AG04450 (cell line): ENCODE measurements at regions of chr19 and their contacts with region 1.

Region 1: GRCh38 chr19:39435499-39436349 is at the start of gene RPS16:
- DNase-seq: peak; percentile 93
- H3K4me3 ChIP-seq: peak within 1 kb of the TSS; percentile 99
- H3K27ac ChIP-seq: peak within 1 kb of the TSS; percentile 77
- H3K27me3 ChIP-seq: no peaks in the 10 kb centered on the region
- CTCF ChIP-seq: no peak
- polyA plus RNA-seq, gene RPS16: 1,488 and 2,094 TPM in 2 replicates

Region 2: GRCh38 chr19:39351537-39352064 is 84.1 kb before region 1 on chr19:
- CTCF ChIA-PET with region 1: no interaction called
- POLR2A ChIA-PET with region 1: no interaction called
- DNase-seq: no peak
- H3K4me3 ChIP-seq: no peak overlapping the region
- H3K27ac ChIP-seq: no peak overlapping the region
- H3K27me3 ChIP-seq: no peaks in the 10 kb centered on the region
- CTCF ChIP-seq: no peak

Region 3: GRCh38 chr19:39390755-39391592 is 44.8 kb before region 1 on chr19 and contains the starts of genes MED29 and PAF1:
- CTCF ChIA-PET with region 1: no interaction called
- POLR2A ChIA-PET with region 1: interaction called, 20 read pairs
- DNase-seq: peak; percentile 99
- H3K4me3 ChIP-seq: peak within 1 kb of the TSS; percentile 99
- H3K27ac ChIP-seq: peak within 1 kb of the TSS; percentile 94
- H3K27me3 ChIP-seq: no peaks in the 10 kb centered on the region
- CTCF ChIP-seq: no peak
- polyA plus RNA-seq, gene MED29: 28.0 and 29.9 TPM in 2 replicates
- polyA plus RNA-seq, gene PAF1: 51.9 and 60.5 TPM in 2 replicates

Region 4: GRCh38 chr19:39397360-39398296 is 38.1 kb before region 1 on chr19:
- CTCF ChIA-PET with region 1: interaction called, 10 read pairs
- POLR2A ChIA-PET with region 1: interaction called, 18 read pairs
- DNase-seq: no peak
- H3K4me3 ChIP-seq: no peak overlapping the region
- H3K27ac ChIP-seq: peak overlapping the region; percentile 57
- H3K27me3 ChIP-seq: no peaks in the 10 kb centered on the region
- CTCF ChIP-seq: peak; percentile 96

Region 5: GRCh38 chr19:39406656-39407393 is 28.9 kb before region 1 on chr19 and contains the start of gene ZFP36:
- CTCF ChIA-PET with region 1: interaction called, 9 read pairs
- POLR2A ChIA-PET with region 1: interaction called, 27 read pairs
- DNase-seq: peak; percentile 60
- H3K4me3 ChIP-seq: peak within 1 kb of the TSS; percentile 93
- H3K27ac ChIP-seq: peak within 1 kb of the TSS; percentile 81
- H3K27me3 ChIP-seq: no peaks in the 10 kb centered on the region
- CTCF ChIP-seq: no peak
- polyA plus RNA-seq, gene ZFP36: 4.1 and 8.3 TPM in 2 replicates

Region 6: DNA sequence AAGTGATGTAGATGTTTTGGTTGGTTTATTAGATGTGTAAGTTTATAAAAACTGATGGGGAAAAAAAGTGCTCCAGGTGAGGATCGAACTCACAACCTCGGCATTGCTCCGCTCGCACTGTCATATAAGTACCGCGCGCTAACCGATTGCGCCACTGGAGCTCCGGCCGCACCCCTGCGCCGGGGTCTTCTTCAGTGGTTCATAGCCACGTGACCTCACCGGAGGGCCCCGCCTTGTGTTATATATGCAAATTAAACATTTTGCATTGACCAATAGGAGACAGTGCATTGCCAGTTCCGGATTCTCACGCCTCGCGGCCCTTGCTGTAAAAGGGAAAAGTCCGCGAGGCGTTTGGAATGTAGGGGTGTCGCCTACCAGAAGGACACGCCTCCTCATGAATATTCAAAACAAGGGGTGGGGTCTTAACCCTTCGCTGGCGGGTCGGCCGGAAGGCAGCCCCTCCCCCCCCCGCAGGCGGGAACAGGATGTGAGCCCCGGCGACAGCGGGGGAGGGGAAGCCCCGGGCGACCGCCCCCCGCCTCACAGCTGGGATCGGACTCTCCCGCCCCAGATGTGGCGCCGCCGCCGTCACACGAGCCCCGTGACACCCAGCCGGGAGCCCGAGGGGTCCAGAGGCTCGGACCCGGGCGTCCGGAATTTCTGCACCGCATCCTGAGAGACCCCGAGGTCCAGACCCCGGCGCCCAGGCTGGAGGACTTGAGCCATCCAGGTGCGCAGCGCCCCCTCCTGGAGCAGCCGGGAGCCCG is 23.4 kb before region 1 on chr19 and contains the start of gene PLEKHG2:
- CTCF ChIA-PET with region 1: interaction called, 9 read pairs
- POLR2A ChIA-PET with region 1: interaction called, 44 read pairs
- DNase-seq: peak; percentile 100
- H3K4me3 ChIP-seq: peak within 1 kb of the TSS; percentile 84
- H3K27ac ChIP-seq: peak within 1 kb of the TSS; percentile 92
- H3K27me3 ChIP-seq: no peaks in the 10 kb centered on the region
- CTCF ChIP-seq: peak; percentile 75
- polyA plus RNA-seq, gene PLEKHG2: 12.3 and 19.1 TPM in 2 replicates

Region 7: GRCh38 chr19:39423258-39424086 is 12.3 kb before region 1 on chr19:
- CTCF ChIA-PET with region 1: interaction called, 3 read pairs
- POLR2A ChIA-PET with region 1: interaction called, 43 read pairs
- DNase-seq: no peak
- H3K4me3 ChIP-seq: no peak overlapping the region
- H3K27ac ChIP-seq: no peak overlapping the region
- H3K27me3 ChIP-seq: no peaks in the 10 kb centered on the region
- CTCF ChIP-seq: no peak

Region 8: DNA sequence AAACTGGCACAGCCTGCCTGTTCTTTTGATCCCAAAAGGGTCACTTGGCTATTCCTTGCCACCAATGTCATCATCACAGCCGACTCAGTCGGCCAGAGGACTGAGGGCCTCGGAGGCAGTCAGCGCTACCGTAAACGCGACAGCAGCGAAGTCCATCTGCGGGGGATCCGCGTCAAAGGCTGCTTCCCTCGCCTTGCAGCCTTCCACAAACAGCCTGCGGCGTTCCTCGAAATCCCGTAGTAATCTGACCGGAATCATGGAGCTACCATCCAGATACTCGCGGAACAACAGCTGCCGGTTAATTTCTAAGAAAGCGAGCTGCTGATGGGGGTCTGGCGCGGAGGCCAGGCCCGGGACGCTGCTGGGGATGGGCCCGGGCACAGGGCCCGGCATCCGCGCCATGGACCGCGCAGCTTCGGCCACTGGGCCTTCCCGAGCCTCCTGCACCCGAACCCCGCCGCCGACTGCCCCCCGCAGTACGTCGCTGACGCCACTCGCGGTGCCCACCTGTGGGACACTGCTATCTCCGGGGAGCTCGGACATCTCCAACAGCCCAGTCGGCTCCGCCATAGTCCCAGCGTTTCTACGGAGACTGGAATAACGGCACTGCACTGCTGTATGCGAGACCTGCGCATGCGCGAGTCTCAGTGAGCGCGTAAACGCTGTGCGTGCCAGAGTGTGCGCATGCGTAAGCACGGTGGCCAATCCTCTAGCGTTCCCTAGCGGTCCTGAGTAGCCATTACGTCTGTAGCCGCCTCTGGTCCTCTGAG is 96.7 kb after region 1 on chr19 and contains the start of gene EID2B:
- CTCF ChIA-PET with region 1: interaction called, 32 read pairs
- POLR2A ChIA-PET with region 1: interaction called, 10 read pairs
- DNase-seq: peak; percentile 95
- H3K4me3 ChIP-seq: peak within 1 kb of the TSS; percentile 95
- H3K27ac ChIP-seq: peak within 1 kb of the TSS; percentile 52
- H3K27me3 ChIP-seq: no peaks in the 10 kb centered on the region
- CTCF ChIP-seq: peak; percentile 98
- polyA plus RNA-seq, gene EID2B: 2.3 and 3.1 TPM in 2 replicates

Region 9: GRCh38 chr19:39563408-39563807 is 127.7 kb after region 1 on chr19:
- CTCF ChIA-PET with region 1: no interaction called
- POLR2A ChIA-PET with region 1: no interaction called
- DNase-seq: no peak
- H3K4me3 ChIP-seq: no peak overlapping the region
- H3K27ac ChIP-seq: no peak overlapping the region
- H3K27me3 ChIP-seq: no peaks in the 10 kb centered on the region
- CTCF ChIP-seq: no peak